HAP-1 (cell line): ENCODE measurements at regions of chr10 and their contacts with region 1.

Region 1: GRCh38 chr10:127911218-127911866 is 4.4 kb downstream of the PTPRE start:
- DNase-seq: peak in 1 of 2 experiments; percentile 5
- H3K4me3 ChIP-seq: no peak overlapping the region
- H3K4me1 ChIP-seq: peaks cover 17% of the 10 kb centered on the region
- H3K27me3 ChIP-seq: no peaks in the 10 kb centered on the region

Region 2: GRCh38 chr10:127338399-127339110 is 572.8 kb before region 1 on chr10:
- in situ Hi-C with region 1: no loop called
- DNase-seq: no peak
- H3K4me3 ChIP-seq: no peak overlapping the region
- H3K4me1 ChIP-seq: no peaks in the 10 kb centered on the region
- H3K27me3 ChIP-seq: no peaks in the 10 kb centered on the region

Region 3: GRCh38 chr10:127774766-127775559 is 136.4 kb before region 1 on chr10:
- in situ Hi-C with region 1: no loop called
- DNase-seq: no peak
- H3K4me3 ChIP-seq: no peak overlapping the region
- H3K4me1 ChIP-seq: no peaks in the 10 kb centered on the region
- H3K27me3 ChIP-seq: no peaks in the 10 kb centered on the region

Region 4: GRCh38 chr10:128011175-128011979 is 100.0 kb after region 1 on chr10:
- in situ Hi-C with region 1: loop called (anchors 5 kb)
- DNase-seq: peak; percentile 63 to 88
- H3K4me3 ChIP-seq: no peak overlapping the region
- H3K4me1 ChIP-seq: no peaks in the 10 kb centered on the region
- H3K27me3 ChIP-seq: no peaks in the 10 kb centered on the region

Region 5: GRCh38 chr10:128069351-128070051 is 158.2 kb after region 1 on chr10:
- in situ Hi-C with region 1: loop called (anchors 5 kb)
- DNase-seq: peak; percentile 78 to 84
- H3K4me3 ChIP-seq: no peak overlapping the region
- H3K4me1 ChIP-seq: no peaks in the 10 kb centered on the region
- H3K27me3 ChIP-seq: no peaks in the 10 kb centered on the region